Aorta (tissue), 5 donors: ENCODE measurements at regions of chr15 and their contacts with region 1.

Region 1: DNA sequence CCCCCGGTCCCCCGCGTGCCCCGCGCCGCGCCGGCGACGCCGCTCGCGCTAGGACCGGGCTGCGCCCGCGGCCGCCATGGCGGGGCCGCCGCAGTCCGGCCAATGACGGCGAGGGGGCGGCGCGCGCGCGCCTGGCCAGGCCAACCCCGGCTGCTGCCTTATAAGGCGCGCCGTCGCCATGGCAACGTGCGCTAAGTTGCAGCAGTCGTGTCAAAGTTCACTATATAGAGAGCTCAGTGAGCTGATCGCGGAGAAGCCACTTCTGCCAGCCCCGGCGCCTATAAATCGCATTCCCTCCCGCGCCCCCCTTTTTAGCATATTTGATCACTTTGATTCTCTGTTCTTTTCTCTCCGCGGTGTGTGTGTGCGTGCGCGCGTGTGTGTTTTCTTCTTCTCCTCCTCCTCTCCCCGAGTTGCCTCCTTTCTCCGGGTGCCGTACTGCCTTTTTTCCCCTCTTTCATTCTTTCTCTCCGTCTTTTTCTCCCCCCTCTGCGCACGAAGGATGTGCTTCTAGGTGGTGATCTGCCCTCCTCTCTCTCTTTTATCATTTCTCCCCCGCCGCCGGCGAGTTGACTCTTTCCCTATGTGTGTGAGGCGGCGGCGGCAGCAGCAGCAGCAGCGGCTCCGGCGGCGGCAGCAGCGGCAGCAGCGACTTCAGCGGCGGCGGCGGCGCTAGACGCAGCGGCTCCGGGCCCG is at the start of gene NR2F2:
- DNase-seq: peak; percentile 96 to 97
- ATAC-seq: peak; percentile 88
- H3K4me3 ChIP-seq: peak within 1 kb of the TSS; percentile 89 to 98
- H3K27ac ChIP-seq: peak within 1 kb of the TSS; percentile 20 to 98
- H3K4me1 ChIP-seq: no peaks in the 10 kb centered on the region
- H3K27me3 ChIP-seq: no peaks in the 10 kb centered on the region
- total RNA-seq, gene NR2F2: 102 to 132 TPM

Region 2: DNA sequence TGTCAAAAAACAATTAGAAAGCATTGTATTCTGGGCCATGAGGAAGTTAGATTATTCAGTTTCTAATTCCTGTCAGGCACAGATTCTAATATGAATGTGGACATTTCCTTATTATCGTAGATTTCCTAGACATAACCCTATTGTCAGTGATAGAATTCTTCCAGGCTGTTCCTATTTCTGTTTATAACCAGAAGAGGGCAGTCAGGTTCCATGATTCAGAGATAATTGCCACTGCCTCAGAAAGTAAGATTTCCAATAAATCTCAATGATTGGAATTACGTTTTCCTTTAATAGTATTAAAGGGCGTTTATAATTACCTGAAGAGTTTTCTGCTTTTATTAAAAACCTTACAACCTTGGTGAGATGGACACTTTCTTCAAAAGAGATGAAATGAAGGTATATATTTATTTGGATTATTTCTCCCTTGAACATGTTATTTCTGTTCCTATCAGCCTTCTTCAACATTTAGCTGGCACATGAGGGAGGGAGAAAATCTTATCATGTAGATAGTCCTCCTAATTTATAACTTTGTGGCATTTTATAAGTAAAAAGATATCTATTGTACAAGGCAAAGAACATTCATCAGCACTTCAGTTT is 1660.1 kb before region 1 on chr15:
- intact Hi-C with region 1: loop called in 1 of 2 experiments (anchors 5 kb)
- DNase-seq: no peak
- ATAC-seq: no peak
- H3K4me3 ChIP-seq: no peak overlapping the region
- H3K27ac ChIP-seq: no peak overlapping the region
- H3K4me1 ChIP-seq: no peaks in the 10 kb centered on the region
- H3K27me3 ChIP-seq: peaks cover 0 to 2% of the 10 kb centered on the region in 2 donors

Region 3: GRCh38 chr15:95464509-95464908 is 866.1 kb before region 1 on chr15:
- intact Hi-C with region 1: loop called in 1 of 2 experiments (anchors 10 kb)
- DNase-seq: no peak
- ATAC-seq: peak; percentile 53
- H3K4me3 ChIP-seq: no peak overlapping the region
- H3K27ac ChIP-seq: peak overlapping the region in 1 of 2 donors; percentile 63
- H3K4me1 ChIP-seq: peaks cover 0 to 1% of the 10 kb centered on the region in 2 donors
- H3K27me3 ChIP-seq: no peaks in the 10 kb centered on the region

Region 4: DNA sequence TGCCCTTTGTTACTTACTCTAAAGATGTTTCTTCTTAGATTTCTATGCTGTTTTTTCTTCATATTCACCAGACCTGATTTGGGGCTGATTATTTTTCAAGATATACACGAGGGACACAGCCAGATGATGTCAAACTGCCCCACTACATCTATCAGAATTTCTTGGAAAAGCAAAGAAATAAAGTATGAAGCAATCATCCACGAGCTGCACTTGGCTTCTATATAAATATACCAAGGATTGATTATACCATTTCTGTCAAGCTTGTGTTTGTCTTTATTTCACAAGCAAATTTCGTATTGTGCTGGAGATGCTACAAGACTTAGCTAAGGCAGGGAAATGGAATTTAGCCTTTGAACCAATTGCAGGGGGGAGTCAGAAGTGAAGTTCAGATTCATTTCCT is 715.2 kb before region 1 on chr15:
- intact Hi-C with region 1: loop called in 1 of 2 experiments (anchors 10 kb)
- DNase-seq: no peak
- ATAC-seq: no peak
- H3K4me3 ChIP-seq: no peak overlapping the region
- H3K27ac ChIP-seq: peak overlapping the region in 1 of 2 donors; percentile 44
- H3K4me1 ChIP-seq: peaks cover 0 to 6% of the 10 kb centered on the region in 2 donors
- H3K27me3 ChIP-seq: no peaks in the 10 kb centered on the region

Region 5: DNA sequence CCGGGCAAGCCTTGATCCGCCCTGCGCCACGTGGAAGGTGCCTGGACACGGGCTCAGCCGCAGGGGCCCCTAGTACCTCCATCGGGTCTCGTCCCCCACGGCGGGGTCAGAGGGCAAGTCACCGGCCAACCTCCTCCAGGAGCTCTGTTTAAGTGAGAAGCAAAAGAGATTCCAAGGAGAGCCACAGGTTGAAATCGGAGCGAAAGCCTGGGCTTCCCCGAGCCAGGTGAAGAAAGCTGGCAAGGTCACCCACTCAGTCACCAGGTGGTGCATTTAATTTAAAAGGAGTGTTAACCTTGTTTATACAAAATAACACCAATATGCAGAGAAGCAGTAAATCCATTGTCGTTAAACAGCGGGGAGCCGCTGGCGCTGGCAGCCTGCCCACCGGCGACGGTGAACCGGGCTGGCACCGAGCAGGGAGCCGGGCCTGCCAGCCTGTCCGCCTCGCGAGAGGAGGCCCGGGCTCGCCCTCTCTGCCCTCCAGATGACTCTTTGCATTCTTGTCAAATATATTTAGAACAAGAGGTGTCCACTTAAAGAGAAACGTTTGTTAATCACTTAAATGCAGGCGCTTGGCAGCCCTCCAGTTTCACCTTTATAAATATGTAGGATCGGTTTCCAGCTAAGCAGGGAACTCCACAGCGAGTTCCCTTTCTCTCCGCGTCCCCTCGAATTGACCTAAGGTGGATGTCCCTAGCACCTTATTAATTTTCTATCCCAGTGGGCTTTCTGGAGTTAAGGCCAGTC is 277.4 kb before region 1 on chr15:
- intact Hi-C with region 1: loop called in 1 of 2 experiments (anchors 10 kb)
- DNase-seq: peak in 1 of 2 donors; percentile 82
- ATAC-seq: peak; percentile 60
- H3K4me3 ChIP-seq: peak overlapping the region in 1 of 2 donors; percentile 2
- H3K27ac ChIP-seq: no peak overlapping the region
- H3K4me1 ChIP-seq: no peaks in the 10 kb centered on the region
- H3K27me3 ChIP-seq: no peaks in the 10 kb centered on the region

Region 6: DNA sequence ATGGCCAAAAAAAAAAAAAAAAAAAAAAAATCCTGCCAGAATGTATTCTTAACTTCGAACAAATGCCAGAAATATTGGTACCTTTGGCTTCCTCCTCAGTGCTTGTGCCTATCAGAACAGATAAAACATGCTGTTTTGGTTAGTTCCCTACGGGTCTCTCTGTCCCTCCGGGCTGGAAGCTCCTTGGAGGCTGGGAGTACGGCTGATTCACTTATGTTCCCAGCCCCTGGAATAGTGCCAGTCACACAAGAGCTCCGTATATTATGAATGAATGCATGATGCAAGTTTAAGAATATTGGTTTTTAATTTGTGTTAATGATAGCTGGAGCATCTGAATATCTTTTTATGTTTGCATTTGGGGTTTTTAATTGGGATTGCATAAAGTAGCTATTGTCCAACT is 43.9 kb after region 1 on chr15:
- intact Hi-C with region 1: no loop called
- DNase-seq: no peak
- ATAC-seq: no peak
- H3K4me3 ChIP-seq: no peak overlapping the region
- H3K27ac ChIP-seq: no peak overlapping the region
- H3K4me1 ChIP-seq: no peaks in the 10 kb centered on the region
- H3K27me3 ChIP-seq: no peaks in the 10 kb centered on the region

Region 7: GRCh38 chr15:96416934-96417759 is 86.5 kb after region 1 on chr15:
- intact Hi-C with region 1: no loop called
- DNase-seq: no peak
- ATAC-seq: no peak
- H3K4me3 ChIP-seq: no peak overlapping the region
- H3K27ac ChIP-seq: no peak overlapping the region
- H3K4me1 ChIP-seq: no peaks in the 10 kb centered on the region
- H3K27me3 ChIP-seq: peaks cover 0 to 2% of the 10 kb centered on the region in 2 donors